Prostate gland (tissue), 2 donors: ENCODE measurements at regions of chr1 and their contacts with region 1.

Region 1: DNA sequence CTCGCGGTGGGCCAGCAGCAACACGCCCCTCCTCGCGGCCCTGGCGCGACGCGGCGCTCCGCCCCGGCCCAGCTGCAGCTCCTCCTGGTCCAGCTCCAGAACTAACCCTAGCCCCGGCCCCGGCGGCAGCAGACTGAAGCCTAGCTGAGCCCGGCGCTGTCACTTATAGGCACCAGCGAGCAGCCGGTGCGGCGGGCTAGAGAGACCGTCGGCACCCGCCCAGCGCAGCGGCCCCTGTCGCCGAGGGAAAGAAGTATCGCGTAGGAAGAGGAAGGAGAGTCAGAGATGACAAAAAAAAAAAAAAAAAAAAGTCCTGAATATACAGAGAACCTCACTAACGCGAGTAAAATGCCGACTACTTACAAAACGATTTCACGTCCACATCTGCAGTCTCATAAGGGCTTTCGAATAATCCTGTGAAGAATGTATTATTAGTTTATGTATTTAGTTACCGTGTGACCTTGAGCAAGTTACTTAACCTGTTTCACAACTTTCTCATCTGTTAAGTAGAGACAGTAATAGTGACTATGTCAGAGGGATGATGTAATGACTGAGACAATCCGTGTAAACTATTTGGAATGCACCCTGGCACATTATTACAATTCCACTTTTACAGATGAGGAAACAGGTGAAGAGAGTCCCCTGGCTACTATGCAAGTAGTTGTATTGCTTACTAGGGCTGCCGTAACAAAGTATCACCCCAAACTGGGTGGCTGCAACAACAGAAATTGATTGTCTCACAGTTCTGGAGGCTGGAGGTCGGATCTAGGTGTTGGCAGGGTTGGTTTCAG is at the start of gene SLC9A1:
- DNase-seq: peak; percentile 92
- H3K4me3 ChIP-seq: peak within 1 kb of the TSS; percentile 72 to 75
- H3K27ac ChIP-seq: peak within 1 kb of the TSS; percentile 87 to 90
- H3K4me1 ChIP-seq: peaks cover 34% of the 10 kb centered on the region
- H3K27me3 ChIP-seq: no peaks in the 10 kb centered on the region
- CTCF ChIP-seq: peak; percentile 29 to 86 (median 65)
- POLR2A ChIP-seq: peak; percentile 96
- total RNA-seq, gene SLC9A1: 22.9 to 30.4 TPM

Region 2: DNA sequence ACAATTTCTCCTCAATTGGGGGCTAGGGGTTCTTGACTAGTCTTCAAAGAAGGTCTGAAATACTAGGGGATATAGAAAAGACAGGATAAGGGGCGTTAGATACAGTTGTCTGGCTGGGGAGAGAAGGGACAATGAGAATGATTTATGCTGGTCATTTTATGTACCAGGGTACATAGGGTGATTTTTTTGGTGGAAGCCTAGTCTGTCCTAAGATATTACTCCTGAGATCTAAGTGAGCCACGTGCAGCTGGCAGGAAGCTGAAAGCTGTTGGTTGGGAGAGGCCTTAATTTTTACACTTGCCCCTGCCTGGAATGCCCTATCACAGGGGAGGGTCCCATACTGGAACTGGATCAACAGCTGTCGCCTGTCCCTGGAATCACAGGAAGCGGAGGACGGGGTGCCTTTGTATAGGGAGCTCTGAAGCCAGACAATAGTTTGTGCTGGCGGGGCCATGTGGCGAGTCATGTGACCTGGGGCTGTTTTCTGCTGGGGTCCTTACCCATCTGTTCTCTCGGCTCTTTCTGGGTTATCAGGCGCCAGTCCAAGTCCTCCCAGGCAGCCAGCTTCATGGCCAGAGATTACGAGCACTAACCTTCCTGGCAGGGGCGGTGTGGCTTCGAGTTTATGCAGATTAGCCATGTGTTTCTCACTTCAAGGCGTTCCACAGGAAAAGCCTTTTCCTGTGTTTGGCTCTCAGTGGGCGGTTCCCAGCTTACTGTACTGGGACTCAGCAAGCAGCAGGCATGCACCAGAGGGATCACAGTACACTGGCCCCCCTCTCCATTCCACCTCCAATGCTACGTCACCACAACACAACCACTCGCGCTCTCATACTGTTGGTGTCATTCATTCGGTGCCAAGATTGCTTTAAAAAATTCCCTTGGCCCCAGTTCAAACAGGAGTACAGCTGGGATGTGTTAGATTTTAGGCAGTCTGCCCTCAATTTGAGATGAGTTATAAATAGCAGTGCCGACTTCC is 431.9 kb before region 1 on chr1:
- intact Hi-C with region 1: no loop called
- DNase-seq: peak; percentile 63
- H3K4me3 ChIP-seq: no peak overlapping the region
- H3K27ac ChIP-seq: peak overlapping the region in 1 of 2 donors; percentile 30
- H3K4me1 ChIP-seq: peaks cover 4% of the 10 kb centered on the region
- H3K27me3 ChIP-seq: no peaks in the 10 kb centered on the region
- CTCF ChIP-seq: no peak
- POLR2A ChIP-seq: no peak

Region 3: DNA sequence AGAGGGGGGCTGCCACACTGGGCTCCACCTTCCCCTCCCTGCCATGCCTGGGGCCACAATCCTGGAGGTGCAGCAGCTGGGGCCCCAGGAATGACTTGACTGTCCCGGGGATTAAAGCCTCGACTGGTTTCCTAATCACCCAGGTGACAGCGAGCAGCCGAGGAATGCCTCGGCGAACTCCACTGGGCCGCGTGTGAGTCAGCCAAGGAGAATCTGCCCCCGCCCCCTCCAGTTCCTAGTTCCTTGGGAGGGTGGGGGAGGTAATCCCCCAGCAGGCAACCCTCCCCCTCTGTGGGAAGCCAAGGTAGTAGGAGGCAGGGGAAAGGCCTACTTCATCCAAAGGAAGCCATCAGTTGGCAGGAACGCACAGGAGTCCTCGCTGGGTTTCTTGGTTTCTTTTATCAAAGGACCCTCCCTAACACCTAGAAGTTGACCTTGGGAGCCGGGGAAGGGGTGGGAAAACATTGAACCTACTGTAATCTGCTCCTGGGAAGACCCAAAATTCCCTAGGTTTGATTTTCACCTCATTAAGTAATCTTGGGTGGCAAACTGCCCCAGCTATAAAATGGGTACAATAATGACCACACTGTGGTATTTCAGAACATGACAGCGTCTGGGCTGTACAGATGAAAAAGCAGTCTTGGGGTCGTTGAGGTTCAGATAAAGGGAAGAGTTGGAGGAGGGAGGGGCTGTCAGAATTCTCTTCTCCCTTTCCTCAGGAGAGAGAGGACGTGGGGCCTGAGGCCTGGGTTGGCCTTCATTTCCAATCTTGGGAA is 144.0 kb before region 1 on chr1:
- intact Hi-C with region 1: no loop called
- DNase-seq: peak; percentile 73
- H3K4me3 ChIP-seq: peak overlapping the region in 1 of 2 donors; percentile 34
- H3K27ac ChIP-seq: peak overlapping the region; percentile 77 to 80
- H3K4me1 ChIP-seq: peaks cover 14% of the 10 kb centered on the region
- H3K27me3 ChIP-seq: no peaks in the 10 kb centered on the region
- CTCF ChIP-seq: no peak
- POLR2A ChIP-seq: peak; percentile 24

Region 4: GRCh38 chr1:27116697-27117096 is 38.5 kb before region 1 on chr1:
- intact Hi-C with region 1: loop called (anchors 5 kb)
- DNase-seq: no peak
- H3K4me3 ChIP-seq: no peak overlapping the region
- H3K27ac ChIP-seq: peak overlapping the region in 1 of 2 donors; percentile 33
- H3K4me1 ChIP-seq: peaks cover 12% of the 10 kb centered on the region
- H3K27me3 ChIP-seq: no peaks in the 10 kb centered on the region
- CTCF ChIP-seq: no peak
- POLR2A ChIP-seq: no peak